ENCODE measurements at regions of chr10 and their contacts with region 1.

Region 1: DNA sequence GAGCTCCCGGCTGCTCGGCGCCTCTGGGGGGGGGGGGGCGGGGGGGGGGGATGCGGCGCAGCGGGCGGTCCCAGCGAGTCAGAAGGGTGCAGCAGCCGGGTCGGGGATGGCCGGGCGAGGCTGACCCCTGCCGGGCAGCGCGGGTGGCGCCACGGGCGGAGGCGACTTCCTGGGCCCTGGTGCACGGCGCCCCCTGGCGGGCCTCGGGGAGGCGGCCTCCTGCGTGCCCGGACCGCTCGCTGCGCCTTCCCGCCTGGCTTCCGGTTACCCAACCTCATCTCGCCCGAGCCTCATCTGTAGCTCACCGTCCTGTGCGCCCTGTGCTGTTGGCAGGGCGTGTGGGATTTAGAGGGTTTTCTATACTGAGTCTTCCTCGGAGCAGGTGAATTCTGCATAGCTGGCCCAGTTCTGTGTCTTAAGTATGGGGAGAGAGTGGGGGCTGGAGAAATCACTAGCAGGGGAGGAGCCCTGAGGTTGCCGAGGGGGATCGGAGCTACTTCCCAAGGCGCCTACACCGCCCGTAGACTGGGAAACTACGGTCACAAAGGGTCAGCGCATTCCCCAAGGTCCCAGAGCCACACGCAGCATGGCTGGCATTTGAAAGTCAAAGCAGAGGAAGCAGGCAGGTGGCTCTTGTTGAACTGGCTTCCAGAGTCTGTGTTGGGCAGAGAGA is 28.3 kb upstream of the WDFY4 start:
- DNase-seq: peak; percentile 76 to 93 (median 88)
- H3K4me3 ChIP-seq: peak overlapping the region; percentile 57 to 87 (median 77)
- H3K27ac ChIP-seq: peak overlapping the region in 41 of 59 donors; percentile 3 to 87 (median 71)
- H3K27me3 ChIP-seq: no peaks in the 10 kb centered on the region
- CTCF ChIP-seq: peak; percentile 73 to 100 (median 98)

Region 2: GRCh38 chr10:48363617-48364355 is 292.6 kb before region 1 on chr10:
- intact Hi-C with region 1: loop called (anchors 2 kb)
- DNase-seq: peak in 2 of 10 donors; percentile 17 to 61
- H3K4me3 ChIP-seq: no peak overlapping the region
- H3K27ac ChIP-seq: no peak overlapping the region
- H3K27me3 ChIP-seq: no peaks in the 10 kb centered on the region
- CTCF ChIP-seq: peak; percentile 32 to 94 (median 76)

Region 3: DNA sequence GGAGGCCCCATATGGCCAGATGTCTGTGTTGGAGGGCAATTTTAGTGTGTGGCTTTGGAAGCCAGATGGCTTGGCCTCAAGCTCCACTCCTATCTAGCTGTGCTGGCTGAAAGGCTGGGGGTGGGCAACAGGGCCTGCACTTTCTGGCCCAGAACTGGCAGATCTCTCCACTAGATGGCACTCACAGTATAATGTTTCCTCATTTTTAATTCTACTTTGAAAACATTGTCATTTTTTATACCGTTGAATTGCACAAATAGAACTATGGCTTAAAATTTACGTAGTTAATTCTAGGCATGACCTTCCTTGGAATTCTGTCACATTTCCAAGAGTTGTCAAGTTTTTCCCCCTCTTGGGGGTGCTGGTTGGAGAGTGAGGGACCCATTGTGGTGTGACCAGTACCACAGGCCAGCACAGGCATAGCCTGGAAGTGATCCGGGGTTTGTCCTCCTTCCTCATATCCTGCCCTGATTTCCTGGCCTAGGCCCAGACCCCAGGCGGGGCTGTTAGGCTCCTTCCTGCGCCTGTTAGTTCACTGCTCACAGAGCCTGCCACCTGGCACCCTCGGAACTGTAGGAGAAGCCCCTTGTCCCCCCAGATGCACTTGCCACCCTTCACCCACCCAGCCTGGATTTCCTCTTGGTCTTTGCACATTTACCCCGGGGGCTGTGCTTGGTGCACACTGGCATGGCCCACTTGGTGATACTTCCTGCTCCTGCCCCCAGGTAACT is 104.4 kb before region 1 on chr10:
- intact Hi-C with region 1: loop called (anchors 1 kb)
- DNase-seq: peak in 4 of 10 donors; percentile 41 to 63 (median 50)
- H3K4me3 ChIP-seq: no peak overlapping the region
- H3K27ac ChIP-seq: peak overlapping the region in 37 of 59 donors; percentile 0 to 77 (median 37)
- H3K27me3 ChIP-seq: no peaks in the 10 kb centered on the region
- CTCF ChIP-seq: peak; percentile 65 to 97 (median 88)

Region 4: GRCh38 chr10:48976196-48976595 is 319.8 kb after region 1 on chr10:
- intact Hi-C with region 1: loop called in 1 of 2 experiments (anchors 5 kb)
- DNase-seq: peak in 1 of 10 donors; percentile 16
- H3K4me3 ChIP-seq: no peak overlapping the region
- H3K27ac ChIP-seq: no peak overlapping the region
- H3K27me3 ChIP-seq: no peaks in the 10 kb centered on the region
- CTCF ChIP-seq: peak in 35 of 56 donors; percentile 9 to 51 (median 26)

Region 5: GRCh38 chr10:49518982-49519578 is 862.7 kb after region 1 on chr10:
- intact Hi-C with region 1: loop called (anchors 5 kb)
- DNase-seq: peak in 3 of 10 donors; percentile 20 to 40 (median 31)
- H3K4me3 ChIP-seq: no peak overlapping the region
- H3K27ac ChIP-seq: peak overlapping the region in 1 of 59 donors; percentile 21
- H3K27me3 ChIP-seq: no peaks in the 10 kb centered on the region
- CTCF ChIP-seq: peak; percentile 45 to 88 (median 74)

Region 6: GRCh38 chr10:49803988-49804387 is 1147.6 kb after region 1 on chr10:
- intact Hi-C with region 1: no loop called
- DNase-seq: no peak
- H3K4me3 ChIP-seq: no peak overlapping the region
- H3K27ac ChIP-seq: no peak overlapping the region
- H3K27me3 ChIP-seq: no peaks in the 10 kb centered on the region
- CTCF ChIP-seq: no peak